ENCODE measurements at regions of chr21 and their contacts with region 1.

Region 1: DNA sequence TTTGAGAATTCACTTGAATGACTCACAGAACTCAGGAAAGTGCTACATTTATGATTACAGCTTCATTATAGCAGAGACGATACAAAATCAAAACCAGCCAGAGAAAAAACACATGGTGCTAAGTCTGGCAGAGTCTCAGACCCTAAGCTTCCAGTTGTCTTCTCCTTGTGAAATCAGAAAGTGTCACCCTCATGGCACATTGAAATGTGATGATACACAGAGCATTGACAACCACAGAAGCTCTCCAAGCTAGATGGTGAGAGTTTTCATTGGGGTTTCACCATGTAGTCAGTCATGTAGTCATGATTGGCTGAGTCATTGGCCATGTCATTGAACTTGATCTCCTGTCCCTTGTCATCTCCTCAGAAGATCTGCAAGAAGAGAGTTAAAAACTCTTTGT is 526.6 kb downstream of the MRPL39 start:
- DNase-seq: no peak
- H3K4me3 ChIP-seq: no peak overlapping the region
- H3K4me3 Mint-ChIP-seq: no peak overlapping the region
- H3K27ac Mint-ChIP-seq: no peak overlapping the region
- H3K4me1 ChIP-seq: no peaks in the 10 kb centered on the region
- H3K4me1 Mint-ChIP-seq: no peaks in the 10 kb centered on the region
- H3K27me3 ChIP-seq: no peaks in the 10 kb centered on the region
- H3K27me3 Mint-ChIP-seq: peaks cover 5% of the 10 kb centered on the region
- CTCF ChIP-seq: no peak

Region 2: DNA sequence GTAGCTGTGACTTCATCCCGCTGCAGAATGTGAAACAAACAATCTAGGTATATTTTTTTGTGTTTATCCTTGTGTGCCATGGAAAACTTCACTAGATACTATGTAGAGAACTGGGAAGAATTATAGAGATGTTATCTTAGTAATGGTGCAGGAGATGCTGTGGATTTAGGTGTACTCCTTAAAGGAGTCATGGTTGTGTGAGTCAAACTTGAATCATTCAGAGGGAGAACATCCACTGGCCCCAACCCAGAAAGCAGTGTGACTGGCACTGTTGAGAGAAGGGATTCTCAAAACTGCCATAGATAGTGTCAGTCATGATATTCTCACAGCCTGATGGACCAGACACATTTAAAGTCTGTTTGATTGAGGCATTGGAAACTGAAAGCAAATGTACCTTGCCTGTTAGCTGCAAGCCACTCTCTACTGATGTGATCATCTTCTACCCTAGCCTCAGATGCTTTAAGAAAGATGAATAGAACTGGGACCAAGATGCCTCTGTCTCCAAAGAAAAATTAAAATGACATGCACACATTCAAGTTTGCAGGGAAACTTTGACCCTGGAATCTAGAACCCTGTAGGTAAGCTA is 228.0 kb before region 1 on chr21:
- CTCF ChIA-PET with region 1: no interaction called
- POLR2A ChIA-PET with region 1: interaction called, 10 read pairs
- intact Hi-C with region 1: no loop called
- DNase-seq: no peak
- H3K4me3 ChIP-seq: no peak overlapping the region
- H3K4me3 Mint-ChIP-seq: no peak overlapping the region
- H3K27ac Mint-ChIP-seq: no peak overlapping the region
- H3K4me1 ChIP-seq: no peaks in the 10 kb centered on the region
- H3K4me1 Mint-ChIP-seq: no peaks in the 10 kb centered on the region
- H3K27me3 ChIP-seq: no peaks in the 10 kb centered on the region
- H3K27me3 Mint-ChIP-seq: no peaks in the 10 kb centered on the region
- CTCF ChIP-seq: no peak

Region 3: DNA sequence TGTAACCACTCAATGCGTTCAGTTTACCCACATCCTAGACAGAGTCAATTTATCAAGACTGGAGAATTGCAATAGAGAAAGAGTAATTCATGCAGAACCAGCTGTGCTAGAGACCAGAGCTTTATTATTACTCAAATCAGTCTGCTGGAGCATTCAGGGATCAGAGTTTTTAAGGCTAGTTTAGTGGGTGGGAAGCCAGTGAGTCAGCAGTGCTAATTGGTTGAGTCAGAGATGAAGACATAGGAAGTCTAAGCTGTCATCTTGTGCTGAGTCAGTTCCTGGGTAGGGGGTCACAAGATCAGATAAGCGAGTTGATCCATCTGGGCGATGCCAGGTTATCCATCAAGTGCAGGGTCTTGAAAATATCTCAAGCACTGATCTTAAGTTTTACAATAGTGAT is 27.0 kb after region 1 on chr21:
- CTCF ChIA-PET with region 1: no interaction called
- POLR2A ChIA-PET with region 1: no interaction called
- intact Hi-C with region 1: no loop called
- DNase-seq: no peak
- H3K4me3 ChIP-seq: no peak overlapping the region
- H3K4me3 Mint-ChIP-seq: no peak overlapping the region
- H3K27ac Mint-ChIP-seq: no peak overlapping the region
- H3K4me1 ChIP-seq: no peaks in the 10 kb centered on the region
- H3K4me1 Mint-ChIP-seq: no peaks in the 10 kb centered on the region
- H3K27me3 ChIP-seq: no peaks in the 10 kb centered on the region
- H3K27me3 Mint-ChIP-seq: no peaks in the 10 kb centered on the region
- CTCF ChIP-seq: no peak